Naive thymus-derived CD4-positive, alpha-beta T cell (primary cell): ENCODE measurements at regions of chr4 and their contacts with region 1.

Region 1: GRCh38 chr4:102449751-102450352 is 51.3 kb upstream of the NFKB1 start:
- DNase-seq: peak in 7 of 9 donors; percentile 52 to 78 (median 71)
- ATAC-seq: peak; percentile 85
- H3K4me3 ChIP-seq: no peak overlapping the region
- H3K4me3 Mint-ChIP-seq: no peak overlapping the region
- H3K27ac ChIP-seq: no peak overlapping the region
- H3K27ac Mint-ChIP-seq: peak overlapping the region in 2 of 9 donors; percentile 16 to 56
- H3K4me1 ChIP-seq: no peaks in the 10 kb centered on the region
- H3K4me1 Mint-ChIP-seq: peaks cover 2 to 48% (median 9%) of the 10 kb centered on the region in 7 donors
- H3K27me3 ChIP-seq: no peaks in the 10 kb centered on the region
- H3K27me3 Mint-ChIP-seq: peaks cover 0 to 5% (median 0%) of the 10 kb centered on the region in 5 donors

Region 2: GRCh38 chr4:102466298-102466697 is 16.4 kb after region 1 on chr4:
- CTCF ChIA-PET with region 1: no interaction called
- POLR2A ChIA-PET with region 1: interaction called, 3 read pairs
- intact Hi-C with region 1: loop called in 1 of 2 experiments (anchors 2 kb)
- DNase-seq: no peak
- ATAC-seq: peak; percentile 34
- H3K4me3 ChIP-seq: no peak overlapping the region
- H3K4me3 Mint-ChIP-seq: peak overlapping the region in 1 of 10 donors; percentile 3
- H3K27ac ChIP-seq: no peak overlapping the region
- H3K27ac Mint-ChIP-seq: peak overlapping the region in 2 of 9 donors; percentile 10 to 48
- H3K4me1 ChIP-seq: peaks cover 0 to 18% of the 10 kb centered on the region in 2 donors
- H3K4me1 Mint-ChIP-seq: peaks cover 15 to 59% (median 38%) of the 10 kb centered on the region in 7 donors
- H3K27me3 ChIP-seq: no peaks in the 10 kb centered on the region
- H3K27me3 Mint-ChIP-seq: no peaks in the 10 kb centered on the region

Region 3: GRCh38 chr4:102543030-102543928 is 93.4 kb after region 1 on chr4:
- CTCF ChIA-PET with region 1: interaction called, 4 read pairs
- POLR2A ChIA-PET with region 1: interaction called, 4 read pairs
- intact Hi-C with region 1: loop called in 1 of 2 experiments (anchors 2 kb)
- DNase-seq: no peak
- ATAC-seq: no peak
- H3K4me3 ChIP-seq: no peak overlapping the region
- H3K4me3 Mint-ChIP-seq: no peak overlapping the region
- H3K27ac ChIP-seq: no peak overlapping the region
- H3K27ac Mint-ChIP-seq: peak overlapping the region in 3 of 9 donors; percentile 46 to 75 (median 74)
- H3K4me1 ChIP-seq: peaks cover 0 to 4% of the 10 kb centered on the region in 2 donors
- H3K4me1 Mint-ChIP-seq: peaks cover 23 to 67% (median 54%) of the 10 kb centered on the region in 7 donors
- H3K27me3 ChIP-seq: no peaks in the 10 kb centered on the region
- H3K27me3 Mint-ChIP-seq: no peaks in the 10 kb centered on the region

Region 4: DNA sequence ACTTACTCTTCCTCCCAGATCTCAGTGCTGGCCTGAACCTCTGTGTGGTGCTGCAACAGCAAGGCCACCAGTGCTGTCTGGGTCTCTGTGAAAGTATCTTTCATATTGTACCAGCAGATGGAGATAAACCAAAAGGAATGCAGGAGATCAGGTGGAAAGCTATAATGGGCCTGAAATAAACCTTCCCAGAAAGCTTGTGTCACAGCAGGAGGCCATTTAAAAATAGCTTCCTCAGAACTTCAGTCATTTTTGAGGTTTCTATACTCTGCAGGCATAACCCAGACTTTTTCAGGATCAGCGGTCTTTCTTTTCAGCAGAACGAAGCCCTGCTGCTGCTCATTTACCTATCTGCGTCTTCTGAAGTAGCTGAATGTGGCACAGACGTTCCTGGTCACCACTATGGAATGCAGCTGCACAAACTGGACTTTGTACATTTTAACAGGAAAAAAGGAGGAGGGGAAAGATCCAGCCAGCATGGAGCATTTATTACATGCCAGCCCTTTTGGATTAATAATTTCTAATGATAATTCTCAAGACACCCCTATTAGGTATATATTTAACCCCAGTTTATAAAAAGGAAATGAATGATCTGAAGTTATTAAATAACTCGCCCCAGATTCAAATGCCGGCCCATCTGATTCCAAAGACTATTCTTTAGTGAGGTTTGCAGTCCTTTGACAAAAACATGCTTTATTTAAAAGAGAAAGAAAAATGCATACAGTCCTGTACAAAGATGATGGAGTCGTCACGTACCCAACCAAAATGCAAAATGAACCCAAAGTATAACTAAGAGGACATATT is 171.0 kb after region 1 on chr4:
- CTCF ChIA-PET with region 1: interaction called, 32 read pairs
- POLR2A ChIA-PET with region 1: interaction called, 3 read pairs
- intact Hi-C with region 1: loop called (anchors 1 kb)
- DNase-seq: peak in 2 of 9 donors; percentile 34 to 45
- ATAC-seq: peak; percentile 65
- H3K4me3 ChIP-seq: no peak overlapping the region
- H3K4me3 Mint-ChIP-seq: peak overlapping the region in 3 of 10 donors; percentile 9 to 42 (median 32)
- H3K27ac ChIP-seq: no peak overlapping the region
- H3K27ac Mint-ChIP-seq: peak overlapping the region in 7 of 9 donors; percentile 20 to 85 (median 59)
- H3K4me1 ChIP-seq: peaks cover 7 to 18% of the 10 kb centered on the region in 2 donors
- H3K4me1 Mint-ChIP-seq: peaks cover 15 to 73% (median 46%) of the 10 kb centered on the region in 7 donors
- H3K27me3 ChIP-seq: no peaks in the 10 kb centered on the region
- H3K27me3 Mint-ChIP-seq: no peaks in the 10 kb centered on the region

Region 5: DNA sequence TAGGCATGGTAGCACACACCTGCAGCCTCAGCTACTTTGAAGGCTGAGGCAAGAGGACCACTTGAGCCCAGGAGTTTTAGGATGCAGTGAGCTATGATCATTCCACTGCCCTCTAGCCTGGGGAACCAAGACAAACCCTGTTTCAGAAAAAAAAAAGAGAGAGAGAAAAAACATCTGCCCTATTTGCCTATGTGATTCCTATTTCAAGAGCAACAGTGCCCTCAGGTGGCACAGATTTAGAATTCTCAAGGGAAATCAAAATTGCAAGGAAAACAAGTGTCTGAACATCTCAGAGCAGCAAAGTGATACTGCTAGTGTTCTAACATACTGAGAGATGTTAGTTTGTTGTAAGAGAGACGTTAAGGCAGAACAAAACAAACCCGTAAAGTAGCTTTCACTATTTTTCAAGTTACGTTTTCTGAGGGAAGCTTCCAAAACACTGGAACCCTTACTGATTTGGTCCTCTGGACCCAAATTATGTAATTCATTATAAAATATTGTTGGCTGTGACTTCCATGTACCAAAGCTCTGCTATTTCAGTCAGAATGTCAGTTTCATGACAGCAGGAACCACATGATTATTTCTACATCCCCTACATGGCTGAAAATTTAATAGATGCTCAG is 641.9 kb after region 1 on chr4:
- CTCF ChIA-PET with region 1: no interaction called
- POLR2A ChIA-PET with region 1: no interaction called
- intact Hi-C with region 1: loop called (anchors 1 kb)
- DNase-seq: peak in 7 of 9 donors; percentile 36 to 65 (median 50)
- ATAC-seq: peak; percentile 80
- H3K4me3 ChIP-seq: no peak overlapping the region
- H3K4me3 Mint-ChIP-seq: peak overlapping the region in 1 of 10 donors; percentile 78
- H3K27ac ChIP-seq: no peak overlapping the region
- H3K27ac Mint-ChIP-seq: peak overlapping the region in 3 of 9 donors; percentile 2 to 72 (median 41)
- H3K4me1 ChIP-seq: no peaks in the 10 kb centered on the region
- H3K4me1 Mint-ChIP-seq: peaks cover 0 to 26% (median 20%) of the 10 kb centered on the region in 7 donors
- H3K27me3 ChIP-seq: no peaks in the 10 kb centered on the region
- H3K27me3 Mint-ChIP-seq: no peaks in the 10 kb centered on the region